Spleen (tissue), 13 donors: ENCODE measurements at regions of chr5 and their contacts with region 1.

Region 1: GRCh38 chr5:55226027-55226933 is 835 bp downstream of the MCIDAS start:
- DNase-seq: peak; percentile 77
- H3K4me3 ChIP-seq: peak overlapping the region; percentile 23 to 73 (median 42)
- H3K27ac ChIP-seq: no peak overlapping the region
- H3K4me1 ChIP-seq: peaks cover 20 to 54% (median 39%) of the 10 kb centered on the region in 6 donors
- H3K27me3 ChIP-seq: peaks cover 53 to 100% (median 100%) of the 10 kb centered on the region in 7 donors
- CTCF ChIP-seq: peak in 3 of 11 experiments; percentile 16 to 29 (median 26)
- POLR2A ChIP-seq: no peak

Region 2: GRCh38 chr5:55027595-55027994 is 198.7 kb before region 1 on chr5:
- intact Hi-C with region 1: no loop called
- DNase-seq: no peak
- H3K4me3 ChIP-seq: peak overlapping the region in 1 of 8 donors; percentile 44
- H3K27ac ChIP-seq: peak overlapping the region in 1 of 8 donors; percentile 31
- H3K4me1 ChIP-seq: peaks cover 0 to 13% (median 0%) of the 10 kb centered on the region in 6 donors
- H3K27me3 ChIP-seq: no peaks in the 10 kb centered on the region
- CTCF ChIP-seq: no peak
- POLR2A ChIP-seq: no peak

Region 3: GRCh38 chr5:55172051-55172899 is 54.0 kb before region 1 on chr5:
- intact Hi-C with region 1: loop called (anchors 10 kb)
- DNase-seq: no peak
- H3K4me3 ChIP-seq: peak overlapping the region; percentile 22 to 68 (median 46)
- H3K27ac ChIP-seq: no peak overlapping the region
- H3K4me1 ChIP-seq: peaks cover 20 to 41% (median 33%) of the 10 kb centered on the region in 6 donors
- H3K27me3 ChIP-seq: peaks cover 3 to 98% (median 62%) of the 10 kb centered on the region in 7 donors
- CTCF ChIP-seq: peak; percentile 67 to 89 (median 80)
- POLR2A ChIP-seq: no peak